BJ (cell line): ENCODE measurements at regions of chr17 and their contacts with region 1.

Region 1: DNA sequence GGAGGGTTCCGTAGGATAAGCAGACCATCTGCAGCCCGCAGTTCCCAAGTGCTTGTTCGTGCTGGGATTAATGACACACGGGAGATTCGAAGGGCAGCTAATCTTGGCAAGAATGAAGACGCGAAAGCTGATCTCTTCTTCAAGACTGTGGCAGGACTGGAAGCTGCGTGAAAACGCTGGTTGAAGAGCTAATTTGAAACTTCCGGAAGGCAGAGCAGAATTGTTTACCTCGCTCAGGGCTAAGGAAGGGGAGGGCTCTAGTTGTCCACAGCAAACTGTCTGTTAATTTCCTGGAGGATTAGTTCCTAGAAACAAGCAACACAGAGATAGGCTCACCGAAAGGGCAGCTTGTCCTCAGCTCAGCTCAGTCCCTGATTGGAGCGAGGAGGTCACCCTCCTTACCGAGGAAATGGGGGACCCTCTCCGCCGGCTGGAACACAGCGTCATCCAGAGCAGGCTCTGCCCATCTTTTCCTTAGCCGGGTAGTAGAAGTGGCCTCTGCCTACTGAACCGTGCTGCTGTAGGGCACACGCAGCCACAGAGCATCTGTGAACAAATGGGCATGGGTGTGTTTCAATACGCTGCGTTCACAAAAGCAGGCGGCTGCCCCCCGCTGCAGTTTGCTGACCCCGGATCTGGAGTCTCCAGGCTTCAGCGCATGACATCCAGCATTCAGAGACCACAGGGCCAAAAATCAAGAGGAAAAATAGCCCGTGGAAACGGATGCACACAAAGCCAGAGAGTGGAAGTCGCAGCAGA is 16.7 kb upstream of the BAIAP2 start:
- DNase-seq: no peak
- H3K4me3 ChIP-seq: no peak overlapping the region
- H3K27me3 ChIP-seq: no peaks in the 10 kb centered on the region
- CTCF ChIP-seq: no peak

Region 2: GRCh38 chr17:80949451-80950421 is 68.5 kb before region 1 on chr17:
- CTCF ChIA-PET with region 1: no interaction called
- POLR2A ChIA-PET with region 1: no interaction called
- DNase-seq: no peak
- H3K4me3 ChIP-seq: no peak overlapping the region
- H3K27me3 ChIP-seq: no peaks in the 10 kb centered on the region
- CTCF ChIP-seq: no peak

Region 3: GRCh38 chr17:80991645-80992076 is 26.6 kb before region 1 on chr17 and contains the start of gene CHMP6:
- CTCF ChIA-PET with region 1: interaction called, 13 read pairs
- POLR2A ChIA-PET with region 1: no interaction called
- DNase-seq: no peak
- H3K4me3 ChIP-seq: peak within 1 kb of the TSS; percentile 82
- H3K27me3 ChIP-seq: no peaks in the 10 kb centered on the region
- CTCF ChIP-seq: no peak
- polyA plus RNA-seq, gene CHMP6: 27.3 and 30.7 TPM in 2 replicates

Region 4: GRCh38 chr17:81034779-81035388 is 16.7 kb after region 1 on chr17 and contains the start of gene BAIAP2:
- CTCF ChIA-PET with region 1: interaction called, 18 read pairs
- POLR2A ChIA-PET with region 1: no interaction called
- DNase-seq: no peak
- H3K4me3 ChIP-seq: peak within 1 kb of the TSS; percentile 75
- H3K27me3 ChIP-seq: no peaks in the 10 kb centered on the region
- CTCF ChIP-seq: no peak
- polyA plus RNA-seq, gene BAIAP2: 7.8 and 12.1 TPM in 2 replicates